A673 (cell line): ENCODE measurements at regions of chr18 and their contacts with region 1.

Region 1: GRCh38 chr18:35522130-35522959 is 24.6 kb upstream of the INO80C start:
- DNase-seq: no peak
- H3K4me3 ChIP-seq: no peak overlapping the region
- H3K27ac ChIP-seq: no peak overlapping the region
- H3K4me1 ChIP-seq: peaks cover 9% of the 10 kb centered on the region
- H3K27me3 ChIP-seq: no peaks in the 10 kb centered on the region
- CTCF ChIP-seq: no peak

Region 2: GRCh38 chr18:35672897-35673296 is 150.6 kb after region 1 on chr18:
- CTCF ChIA-PET with region 1: no interaction called
- POLR2A ChIA-PET with region 1: no interaction called
- intact Hi-C with region 1: no loop called
- DNase-seq: no peak
- H3K4me3 ChIP-seq: no peak overlapping the region
- H3K27ac ChIP-seq: no peak overlapping the region
- H3K4me1 ChIP-seq: no peaks in the 10 kb centered on the region
- H3K27me3 ChIP-seq: no peaks in the 10 kb centered on the region
- CTCF ChIP-seq: no peak

Region 3: GRCh38 chr18:36582988-36583745 is 1060.8 kb after region 1 on chr18:
- CTCF ChIA-PET with region 1: no interaction called
- POLR2A ChIA-PET with region 1: interaction called, 17 read pairs
- intact Hi-C with region 1: no loop called
- DNase-seq: no peak
- H3K4me3 ChIP-seq: no peak overlapping the region
- H3K27ac ChIP-seq: no peak overlapping the region
- H3K4me1 ChIP-seq: no peaks in the 10 kb centered on the region
- H3K27me3 ChIP-seq: no peaks in the 10 kb centered on the region
- CTCF ChIP-seq: no peak